ENCODE measurements at regions of chr15 and their contacts with region 1.

Region 1: GRCh38 chr15:69576035-69576526 is 123.5 kb downstream of the RPLP1 start:
- DNase-seq: peak; percentile 57 to 86 (median 70)
- ATAC-seq: peak; percentile 82
- H3K4me3 ChIP-seq: no peak overlapping the region
- H3K4me3 Mint-ChIP-seq: no peak overlapping the region
- H3K27ac ChIP-seq: no peak overlapping the region
- H3K27ac Mint-ChIP-seq: no peak overlapping the region
- H3K4me1 ChIP-seq: peaks cover 11% of the 10 kb centered on the region
- H3K4me1 Mint-ChIP-seq: peaks cover 21% of the 10 kb centered on the region
- H3K27me3 ChIP-seq: no peaks in the 10 kb centered on the region
- H3K27me3 Mint-ChIP-seq: no peaks in the 10 kb centered on the region
- CTCF ChIP-seq: peak; percentile 80

Region 2: GRCh38 chr15:69475769-69476358 is 100.2 kb before region 1 on chr15:
- CTCF ChIA-PET with region 1: interaction called, 5 read pairs
- POLR2A ChIA-PET with region 1: no interaction called
- intact Hi-C with region 1: loop called in 1 of 2 experiments (anchors 5 kb)
- DNase-seq: peak; percentile 45 to 82 (median 78)
- ATAC-seq: peak; percentile 95
- H3K4me3 ChIP-seq: no peak overlapping the region
- H3K4me3 Mint-ChIP-seq: no peak overlapping the region
- H3K27ac ChIP-seq: no peak overlapping the region
- H3K27ac Mint-ChIP-seq: no peak overlapping the region
- H3K4me1 ChIP-seq: no peaks in the 10 kb centered on the region
- H3K4me1 Mint-ChIP-seq: no peaks in the 10 kb centered on the region
- H3K27me3 ChIP-seq: no peaks in the 10 kb centered on the region
- H3K27me3 Mint-ChIP-seq: peaks cover 6% of the 10 kb centered on the region
- CTCF ChIP-seq: peak; percentile 98

Region 3: GRCh38 chr15:69628371-69629093 is 52.5 kb after region 1 on chr15:
- CTCF ChIA-PET with region 1: no interaction called
- POLR2A ChIA-PET with region 1: no interaction called
- intact Hi-C with region 1: no loop called
- DNase-seq: no peak
- ATAC-seq: no peak
- H3K4me3 ChIP-seq: no peak overlapping the region
- H3K4me3 Mint-ChIP-seq: no peak overlapping the region
- H3K27ac ChIP-seq: no peak overlapping the region
- H3K27ac Mint-ChIP-seq: no peak overlapping the region
- H3K4me1 ChIP-seq: no peaks in the 10 kb centered on the region
- H3K4me1 Mint-ChIP-seq: peaks cover 6% of the 10 kb centered on the region
- H3K27me3 ChIP-seq: peaks cover 0 to 3% of the 10 kb centered on the region in 2 experiments
- H3K27me3 Mint-ChIP-seq: peaks cover 6% of the 10 kb centered on the region
- CTCF ChIP-seq: no peak

Region 4: DNA sequence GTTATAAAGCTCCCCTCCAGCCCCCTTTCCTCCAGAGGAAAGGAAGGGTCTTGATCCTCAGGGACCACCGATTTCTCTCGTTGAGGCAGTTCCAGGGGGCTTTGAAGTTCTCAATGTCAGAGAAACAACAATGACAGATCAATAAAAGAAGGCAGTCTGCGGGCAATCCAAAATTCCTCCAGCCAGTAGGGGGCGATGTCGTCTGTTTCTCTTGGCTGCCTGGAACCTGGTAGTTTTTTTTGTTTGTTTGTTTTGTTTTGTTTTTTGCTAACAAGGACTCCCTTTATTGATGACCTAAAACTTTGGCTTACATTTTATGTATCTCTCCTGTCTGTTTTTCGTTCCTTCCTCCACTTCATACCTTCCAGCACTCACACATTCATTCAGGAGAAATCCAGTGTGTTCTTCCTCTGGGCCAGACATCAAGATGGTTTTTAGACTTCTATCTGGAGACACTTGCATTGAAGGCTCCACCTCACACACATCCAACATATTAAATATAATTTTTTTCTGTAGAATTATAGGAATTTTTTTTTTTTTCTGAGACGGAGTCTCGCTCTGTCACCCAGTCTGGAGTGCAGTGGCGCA is 153.2 kb after region 1 on chr15:
- CTCF ChIA-PET with region 1: interaction called, 5 read pairs
- POLR2A ChIA-PET with region 1: no interaction called
- intact Hi-C with region 1: loop called in 1 of 2 experiments (anchors 5 kb)
- DNase-seq: peak; percentile 56 to 86 (median 79)
- ATAC-seq: peak; percentile 62
- H3K4me3 ChIP-seq: no peak overlapping the region
- H3K4me3 Mint-ChIP-seq: no peak overlapping the region
- H3K27ac ChIP-seq: no peak overlapping the region
- H3K27ac Mint-ChIP-seq: no peak overlapping the region
- H3K4me1 ChIP-seq: peaks cover 12% of the 10 kb centered on the region
- H3K4me1 Mint-ChIP-seq: peaks cover 20% of the 10 kb centered on the region
- H3K27me3 ChIP-seq: peaks cover 0 to 4% of the 10 kb centered on the region in 2 experiments
- H3K27me3 Mint-ChIP-seq: no peaks in the 10 kb centered on the region
- CTCF ChIP-seq: peak; percentile 81

Region 5: DNA sequence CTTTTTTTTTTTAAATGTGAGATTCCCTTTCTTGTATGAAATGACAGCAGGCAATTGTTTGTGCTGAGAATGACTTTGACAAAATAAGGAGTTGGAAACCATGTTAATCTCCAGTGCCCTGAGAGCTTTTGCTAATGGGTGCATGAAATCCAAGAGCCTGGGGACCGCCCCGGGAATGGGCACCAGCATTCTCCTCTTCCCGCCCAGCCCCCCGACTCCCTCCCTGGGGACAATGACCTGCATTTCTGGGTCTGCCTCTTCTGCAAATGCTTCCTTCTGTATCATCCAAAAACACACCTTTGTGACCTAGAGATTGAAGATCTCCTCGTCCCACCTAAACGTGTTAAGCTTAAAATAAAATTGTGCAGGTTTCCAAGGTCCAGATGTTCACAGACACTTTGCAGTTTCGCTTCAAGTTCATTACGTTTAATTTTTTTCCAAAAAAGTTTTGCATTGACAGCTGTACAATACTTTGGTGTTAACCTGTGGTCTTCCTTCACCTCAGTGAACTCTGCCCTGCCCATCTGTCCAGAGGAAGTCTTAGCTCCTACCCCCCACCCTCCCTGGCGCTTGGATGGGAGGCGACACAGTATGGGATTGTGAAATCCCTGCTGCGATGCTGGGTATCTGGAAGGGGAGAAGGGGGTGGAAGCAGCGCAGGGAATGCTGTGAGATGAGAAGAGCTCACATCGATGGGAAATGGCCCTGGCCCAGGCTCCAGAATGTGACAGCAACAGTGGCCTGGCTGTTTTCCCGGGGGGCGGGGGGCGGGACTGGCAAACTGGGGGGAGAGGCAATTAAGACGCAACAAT is 471.5 kb after region 1 on chr15:
- CTCF ChIA-PET with region 1: no interaction called
- POLR2A ChIA-PET with region 1: no interaction called
- intact Hi-C with region 1: loop called in 1 of 2 experiments (anchors 10 kb)
- DNase-seq: no peak
- ATAC-seq: no peak
- H3K4me3 ChIP-seq: no peak overlapping the region
- H3K4me3 Mint-ChIP-seq: no peak overlapping the region
- H3K27ac ChIP-seq: no peak overlapping the region
- H3K27ac Mint-ChIP-seq: no peak overlapping the region
- H3K4me1 ChIP-seq: no peaks in the 10 kb centered on the region
- H3K4me1 Mint-ChIP-seq: no peaks in the 10 kb centered on the region
- H3K27me3 ChIP-seq: no peaks in the 10 kb centered on the region
- H3K27me3 Mint-ChIP-seq: no peaks in the 10 kb centered on the region
- CTCF ChIP-seq: no peak

Region 6: GRCh38 chr15:70466895-70467529 is 890.9 kb after region 1 on chr15:
- CTCF ChIA-PET with region 1: interaction called, 39 read pairs
- POLR2A ChIA-PET with region 1: no interaction called
- intact Hi-C with region 1: no loop called
- DNase-seq: peak in 7 of 9 experiments; percentile 35 to 71 (median 55)
- ATAC-seq: peak; percentile 79
- H3K4me3 ChIP-seq: no peak overlapping the region
- H3K4me3 Mint-ChIP-seq: no peak overlapping the region
- H3K27ac ChIP-seq: no peak overlapping the region
- H3K27ac Mint-ChIP-seq: no peak overlapping the region
- H3K4me1 ChIP-seq: no peaks in the 10 kb centered on the region
- H3K4me1 Mint-ChIP-seq: peaks cover 5% of the 10 kb centered on the region
- H3K27me3 ChIP-seq: no peaks in the 10 kb centered on the region
- H3K27me3 Mint-ChIP-seq: peaks cover 8% of the 10 kb centered on the region
- CTCF ChIP-seq: peak; percentile 58

Region 7: GRCh38 chr15:70722266-70723121 is 1146.4 kb after region 1 on chr15:
- CTCF ChIA-PET with region 1: no interaction called
- POLR2A ChIA-PET with region 1: no interaction called
- intact Hi-C with region 1: loop called in 1 of 2 experiments (anchors 10 kb)
- DNase-seq: peak in 2 of 9 experiments; percentile 57 to 70
- ATAC-seq: no peak
- H3K4me3 ChIP-seq: no peak overlapping the region
- H3K4me3 Mint-ChIP-seq: no peak overlapping the region
- H3K27ac ChIP-seq: no peak overlapping the region
- H3K27ac Mint-ChIP-seq: no peak overlapping the region
- H3K4me1 ChIP-seq: no peaks in the 10 kb centered on the region
- H3K4me1 Mint-ChIP-seq: no peaks in the 10 kb centered on the region
- H3K27me3 ChIP-seq: no peaks in the 10 kb centered on the region
- H3K27me3 Mint-ChIP-seq: peaks cover 11% of the 10 kb centered on the region
- CTCF ChIP-seq: peak; percentile 90